GM12878 (cell line): ENCODE measurements at regions of chr5 and their contacts with region 1.

Region 1: DNA sequence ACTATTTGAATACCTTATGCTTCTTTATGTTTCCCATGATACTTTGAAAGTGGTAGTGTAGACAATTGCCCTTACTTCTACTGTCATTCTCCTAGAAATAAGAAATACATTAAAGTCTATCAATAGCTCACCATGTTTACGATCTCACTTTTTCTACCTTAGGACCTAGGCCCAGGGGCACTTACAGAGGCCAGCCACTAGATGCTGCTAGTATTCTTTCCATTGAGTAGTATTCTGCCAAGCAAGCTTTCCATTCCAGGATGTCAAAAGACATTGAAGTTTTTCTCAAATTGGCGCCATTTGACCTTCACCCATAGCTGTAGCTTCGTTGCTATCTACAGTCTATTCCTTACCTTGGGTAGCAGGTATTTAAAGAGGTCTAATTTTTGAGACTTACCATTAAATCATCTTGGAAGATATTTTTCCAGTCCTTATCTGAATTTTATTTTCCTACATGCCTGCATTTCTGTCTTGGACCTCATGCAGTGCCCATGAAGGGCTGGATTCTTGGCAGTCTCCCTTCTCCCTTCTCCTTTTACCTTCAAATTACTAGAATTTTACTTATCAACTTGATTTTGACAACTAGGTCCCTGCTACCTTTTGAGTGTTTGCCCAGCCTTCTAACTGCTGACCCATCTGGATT is 246.0 kb upstream of the NUDT12 start:
- DNase-seq: no peak
- ATAC-seq: peak; percentile 95
- H3K4me3 ChIP-seq: no peak overlapping the region
- H3K27ac ChIP-seq: no peak overlapping the region
- H3K4me1 ChIP-seq: no peaks in the 10 kb centered on the region
- H3K27me3 ChIP-seq: no peaks in the 10 kb centered on the region
- CTCF ChIP-seq: peak; percentile 82 to 92 (median 85)
- EP300 ChIP-seq: no peak
- POLR2A ChIP-seq: no peak
- RAD21 ChIP-seq: peak; percentile 87

Region 2: GRCh38 chr5:103648086-103648485 is 160.5 kb before region 1 on chr5:
- CTCF ChIA-PET with region 1: no interaction called
- POLR2A ChIA-PET with region 1: no interaction called
- RAD21 ChIA-PET with region 1: no interaction called
- SMC1A ChIA-PET with region 1: no interaction called
- in situ Hi-C with region 1: no loop called
- intact Hi-C with region 1: no loop called
- DNase-seq: no peak
- ATAC-seq: no peak
- H3K4me3 ChIP-seq: no peak overlapping the region
- H3K27ac ChIP-seq: no peak overlapping the region
- H3K4me1 ChIP-seq: no peaks in the 10 kb centered on the region
- H3K27me3 ChIP-seq: no peaks in the 10 kb centered on the region
- CTCF ChIP-seq: peak in 1 of 3 experiments; percentile 19; a peak in 1 of 6 replicates
- EP300 ChIP-seq: no peak
- POLR2A ChIP-seq: no peak
- RAD21 ChIP-seq: no peak

Region 3: DNA sequence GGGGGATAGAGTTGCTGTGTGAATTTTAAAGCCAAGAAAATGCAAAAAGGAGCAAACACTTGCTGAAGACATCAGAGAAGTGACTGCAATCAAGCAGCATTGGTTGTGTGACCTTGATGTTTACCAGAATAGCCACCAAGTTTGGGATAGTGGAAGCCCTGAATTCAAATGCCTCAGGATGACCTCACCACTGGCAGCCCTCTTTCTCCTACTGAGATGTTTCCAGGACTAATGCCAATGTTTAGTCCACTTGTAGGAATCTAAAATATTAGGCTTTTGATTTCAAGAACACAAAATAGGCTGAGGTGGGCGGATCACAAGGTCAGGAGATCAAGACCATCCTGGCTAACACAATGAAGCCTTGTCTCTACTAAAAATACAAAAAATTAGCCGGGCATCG is 133.8 kb before region 1 on chr5:
- CTCF ChIA-PET with region 1: no interaction called
- POLR2A ChIA-PET with region 1: no interaction called
- RAD21 ChIA-PET with region 1: no interaction called
- SMC1A ChIA-PET with region 1: no interaction called
- in situ Hi-C with region 1: no loop called
- intact Hi-C with region 1: no loop called
- DNase-seq: no peak
- ATAC-seq: no peak
- H3K4me3 ChIP-seq: no peak overlapping the region
- H3K27ac ChIP-seq: no peak overlapping the region
- H3K4me1 ChIP-seq: no peaks in the 10 kb centered on the region
- H3K27me3 ChIP-seq: no peaks in the 10 kb centered on the region; a peak in 1 of 4 replicates
- CTCF ChIP-seq: no peak
- EP300 ChIP-seq: no peak
- POLR2A ChIP-seq: no peak
- RAD21 ChIP-seq: no peak

Region 4: GRCh38 chr5:103774721-103775120 is 33.9 kb before region 1 on chr5:
- CTCF ChIA-PET with region 1: no interaction called
- POLR2A ChIA-PET with region 1: no interaction called
- RAD21 ChIA-PET with region 1: no interaction called
- SMC1A ChIA-PET with region 1: no interaction called
- in situ Hi-C with region 1: no loop called
- intact Hi-C with region 1: no loop called
- DNase-seq: no peak
- ATAC-seq: no peak
- H3K4me3 ChIP-seq: no peak overlapping the region
- H3K27ac ChIP-seq: no peak overlapping the region
- H3K4me1 ChIP-seq: no peaks in the 10 kb centered on the region
- H3K27me3 ChIP-seq: no peaks in the 10 kb centered on the region
- CTCF ChIP-seq: no peak
- EP300 ChIP-seq: no peak
- POLR2A ChIP-seq: no peak
- RAD21 ChIP-seq: no peak

Region 5: DNA sequence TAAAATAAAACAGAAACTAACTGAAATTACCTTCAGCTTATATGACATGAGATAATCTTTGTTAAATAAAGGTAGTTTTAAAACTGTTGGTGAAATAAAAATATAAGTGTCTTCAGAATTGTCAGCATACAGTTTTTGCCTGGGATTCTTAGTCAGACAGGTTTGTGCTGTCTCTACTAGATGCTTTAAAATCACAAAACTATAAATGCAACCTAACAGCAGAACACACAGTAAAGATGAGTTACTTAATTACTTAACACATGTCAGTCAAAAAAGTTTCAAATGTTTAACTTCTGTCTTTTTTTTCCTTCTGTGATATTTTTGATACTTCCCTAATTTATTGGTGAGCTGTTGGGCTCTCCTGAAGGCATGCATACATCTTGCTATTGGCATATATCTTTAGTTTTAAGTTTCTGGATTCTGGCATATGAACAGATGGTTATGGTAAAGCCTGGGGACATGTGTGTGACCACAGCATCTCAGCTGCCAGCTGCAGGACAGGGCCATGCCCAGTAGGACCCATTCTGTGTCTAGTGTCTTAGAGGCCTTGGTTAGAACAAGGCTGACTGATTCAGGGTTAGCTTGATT is 14.9 kb before region 1 on chr5:
- CTCF ChIA-PET with region 1: interaction called, 11 read pairs
- POLR2A ChIA-PET with region 1: no interaction called
- RAD21 ChIA-PET with region 1: no interaction called
- SMC1A ChIA-PET with region 1: interaction called, 6 read pairs
- in situ Hi-C with region 1: no loop called
- intact Hi-C with region 1: no loop called
- DNase-seq: no peak
- ATAC-seq: no peak
- H3K4me3 ChIP-seq: no peak overlapping the region
- H3K27ac ChIP-seq: no peak overlapping the region
- H3K4me1 ChIP-seq: no peaks in the 10 kb centered on the region
- H3K27me3 ChIP-seq: no peaks in the 10 kb centered on the region
- CTCF ChIP-seq: no peak
- EP300 ChIP-seq: no peak
- POLR2A ChIP-seq: no peak
- RAD21 ChIP-seq: no peak

Region 6: GRCh38 chr5:104178829-104179456 is 370.4 kb after region 1 on chr5:
- CTCF ChIA-PET with region 1: interaction called, 83 read pairs
- POLR2A ChIA-PET with region 1: no interaction called
- RAD21 ChIA-PET with region 1: interaction called, 78 read pairs
- SMC1A ChIA-PET with region 1: interaction called, 66 read pairs
- in situ Hi-C with region 1: loop called (anchors 5 kb)
- intact Hi-C with region 1: loop called (anchors 1 kb)
- DNase-seq: peak; percentile 19
- ATAC-seq: peak; percentile 99
- H3K4me3 ChIP-seq: no peak overlapping the region
- H3K27ac ChIP-seq: no peak overlapping the region
- H3K4me1 ChIP-seq: no peaks in the 10 kb centered on the region
- H3K27me3 ChIP-seq: no peaks in the 10 kb centered on the region
- CTCF ChIP-seq: peak; percentile 39 to 60 (median 51); a peak in 4 of 6 replicates
- EP300 ChIP-seq: no peak
- POLR2A ChIP-seq: no peak
- RAD21 ChIP-seq: peak; percentile 72

Region 7: GRCh38 chr5:104412649-104413246 is 604.2 kb after region 1 on chr5:
- CTCF ChIA-PET with region 1: interaction called, 11 read pairs
- POLR2A ChIA-PET with region 1: no interaction called
- RAD21 ChIA-PET with region 1: interaction called, 13 read pairs
- SMC1A ChIA-PET with region 1: interaction called, 8 read pairs
- in situ Hi-C with region 1: no loop called
- intact Hi-C with region 1: loop called (anchors 2 kb)
- DNase-seq: no peak
- ATAC-seq: peak; percentile 88
- H3K4me3 ChIP-seq: no peak overlapping the region
- H3K27ac ChIP-seq: no peak overlapping the region
- H3K4me1 ChIP-seq: no peaks in the 10 kb centered on the region
- H3K27me3 ChIP-seq: no peaks in the 10 kb centered on the region
- CTCF ChIP-seq: peak in 2 of 3 experiments; percentile 43 to 46; a peak in 3 of 6 replicates
- EP300 ChIP-seq: no peak
- POLR2A ChIP-seq: no peak
- RAD21 ChIP-seq: peak; percentile 41